Right lobe of liver (tissue), 6 donors: ENCODE measurements at regions of chr6 and their contacts with region 1.

Region 1: DNA sequence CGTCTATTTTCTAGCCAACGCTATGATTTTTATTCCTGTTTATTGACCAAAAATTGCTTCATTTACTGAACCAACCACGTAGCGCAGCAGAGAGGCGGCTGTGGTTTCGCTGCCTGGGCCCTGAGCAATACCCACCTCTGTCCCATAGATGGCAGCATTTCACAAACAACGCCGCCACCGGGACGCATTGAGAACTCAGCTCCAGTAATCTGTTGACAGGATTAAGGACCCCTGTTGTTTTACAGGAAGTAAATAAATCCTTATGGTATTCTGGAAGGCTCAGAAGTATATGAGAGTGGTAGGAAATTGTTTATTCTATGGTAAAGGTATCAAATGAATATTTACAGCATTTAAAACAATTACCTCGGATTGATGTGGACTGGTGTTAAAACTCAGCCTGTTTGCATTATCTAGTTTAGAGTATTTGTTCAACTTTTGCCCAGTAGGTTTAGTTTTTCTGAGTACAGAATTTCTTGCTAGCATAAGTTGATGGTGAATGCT is 547.9 kb upstream of the SLC35B3 start:
- DNase-seq: peak; percentile 56 to 76 (median 71)
- ATAC-seq: peak; percentile 99 to 100 (median 99)
- H3K4me3 ChIP-seq: peak overlapping the region in 2 of 3 donors; percentile 28 to 38
- H3K27ac ChIP-seq: peak overlapping the region in 1 of 3 donors; percentile 30
- H3K4me1 ChIP-seq: no peaks in the 10 kb centered on the region
- H3K27me3 ChIP-seq: no peaks in the 10 kb centered on the region
- CTCF ChIP-seq: peak; percentile 94 to 99 (median 98)
- POLR2A ChIP-seq: no peak

Region 2: GRCh38 chr6:8441452-8441851 is 541.8 kb before region 1 on chr6:
- intact Hi-C with region 1: no loop called
- DNase-seq: no peak
- ATAC-seq: no peak
- H3K4me3 ChIP-seq: no peak overlapping the region
- H3K27ac ChIP-seq: no peak overlapping the region
- H3K4me1 ChIP-seq: no peaks in the 10 kb centered on the region
- H3K27me3 ChIP-seq: no peaks in the 10 kb centered on the region
- CTCF ChIP-seq: no peak
- POLR2A ChIP-seq: no peak

Region 3: GRCh38 chr6:8855411-8855810 is 127.8 kb before region 1 on chr6:
- intact Hi-C with region 1: no loop called
- DNase-seq: no peak
- ATAC-seq: no peak
- H3K4me3 ChIP-seq: no peak overlapping the region
- H3K27ac ChIP-seq: no peak overlapping the region
- H3K4me1 ChIP-seq: peaks cover 0 to 29% (median 3%) of the 10 kb centered on the region in 4 donors
- H3K27me3 ChIP-seq: no peaks in the 10 kb centered on the region
- CTCF ChIP-seq: no peak
- POLR2A ChIP-seq: no peak

Region 4: GRCh38 chr6:9412951-9413559 is 429.8 kb after region 1 on chr6:
- intact Hi-C with region 1: loop called in 1 of 2 experiments (anchors 10 kb)
- DNase-seq: peak; percentile 44 to 58 (median 55)
- ATAC-seq: peak; percentile 79 to 89 (median 82)
- H3K4me3 ChIP-seq: no peak overlapping the region
- H3K27ac ChIP-seq: no peak overlapping the region
- H3K4me1 ChIP-seq: no peaks in the 10 kb centered on the region
- H3K27me3 ChIP-seq: no peaks in the 10 kb centered on the region
- CTCF ChIP-seq: peak; percentile 49 to 70 (median 57)
- POLR2A ChIP-seq: no peak